ENCODE measurements at regions of chr4 and their contacts with region 1.

Region 1: DNA sequence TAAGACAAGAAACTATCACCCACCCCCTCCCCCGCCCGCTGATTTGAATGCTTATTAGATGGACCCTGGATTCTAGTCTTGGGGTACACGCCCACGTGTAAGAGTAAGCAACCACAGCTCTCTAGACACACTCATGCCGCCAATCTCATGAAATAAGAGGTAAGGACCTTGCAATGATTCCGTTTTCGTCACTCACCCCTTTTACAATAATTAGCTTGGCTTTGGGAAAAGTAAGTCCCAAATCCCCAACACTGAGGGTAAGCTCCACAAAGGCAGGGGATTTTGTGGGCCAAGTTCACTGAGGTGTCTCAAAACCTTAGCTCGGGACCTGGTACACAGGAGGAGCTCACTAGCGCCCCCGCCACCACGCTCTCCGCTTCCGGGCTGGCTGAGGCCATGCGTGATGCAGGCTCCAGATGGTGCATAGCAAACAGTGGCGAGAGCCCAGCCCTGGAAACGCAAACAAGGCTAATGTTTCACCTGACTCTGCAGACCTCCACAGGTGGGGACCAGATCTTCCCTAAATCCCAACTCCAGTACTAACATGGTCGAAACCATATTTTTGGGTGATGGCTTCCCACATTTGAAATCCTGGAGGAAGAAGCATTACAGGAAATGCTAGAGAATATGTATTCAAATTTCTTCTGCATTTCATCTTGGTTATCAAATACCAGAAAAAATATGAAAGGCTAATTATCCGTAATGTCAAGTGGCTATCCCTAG is 4.1 kb downstream of the PLAC8 start:
- DNase-seq: peak; percentile 80 to 94 (median 89)
- ATAC-seq: peak; percentile 74
- H3K4me3 ChIP-seq: peak overlapping the region; percentile 69 to 79
- H3K4me3 Mint-ChIP-seq: peak overlapping the region; percentile 99
- H3K27ac ChIP-seq: peak overlapping the region; percentile 68 to 71
- H3K27ac Mint-ChIP-seq: peak overlapping the region; percentile 97
- H3K4me1 ChIP-seq: peaks cover 36% of the 10 kb centered on the region
- H3K4me1 Mint-ChIP-seq: peaks cover 48% of the 10 kb centered on the region
- H3K27me3 ChIP-seq: no peaks in the 10 kb centered on the region
- H3K27me3 Mint-ChIP-seq: no peaks in the 10 kb centered on the region
- CTCF ChIP-seq: peak; percentile 70

Region 2: GRCh38 chr4:83012687-83013419 is 97.5 kb before region 1 on chr4:
- CTCF ChIA-PET with region 1: no interaction called
- POLR2A ChIA-PET with region 1: no interaction called
- intact Hi-C with region 1: loop called (anchors 5 kb)
- DNase-seq: peak; percentile 94 to 98 (median 96)
- ATAC-seq: peak; percentile 88
- H3K4me3 ChIP-seq: peak overlapping the region; percentile 54 to 69
- H3K4me3 Mint-ChIP-seq: peak overlapping the region; percentile 90
- H3K27ac ChIP-seq: peak overlapping the region; percentile 56 to 95
- H3K27ac Mint-ChIP-seq: peak overlapping the region; percentile 91
- H3K4me1 ChIP-seq: peaks cover 31% of the 10 kb centered on the region
- H3K4me1 Mint-ChIP-seq: peaks cover 40% of the 10 kb centered on the region
- H3K27me3 ChIP-seq: no peaks in the 10 kb centered on the region
- H3K27me3 Mint-ChIP-seq: no peaks in the 10 kb centered on the region
- CTCF ChIP-seq: peak; percentile 65

Region 3: GRCh38 chr4:83083925-83084475 is 26.4 kb before region 1 on chr4:
- CTCF ChIA-PET with region 1: interaction called, 40 read pairs
- POLR2A ChIA-PET with region 1: interaction called, 21 read pairs
- intact Hi-C with region 1: loop called in 1 of 2 experiments (anchors 1 kb)
- DNase-seq: peak; percentile 44 to 91 (median 61)
- ATAC-seq: peak; percentile 98
- H3K4me3 ChIP-seq: no peak overlapping the region
- H3K4me3 Mint-ChIP-seq: peak overlapping the region; percentile 47
- H3K27ac ChIP-seq: peak overlapping the region; percentile 67 to 81
- H3K27ac Mint-ChIP-seq: peak overlapping the region; percentile 97
- H3K4me1 ChIP-seq: peaks cover 29% of the 10 kb centered on the region
- H3K4me1 Mint-ChIP-seq: peaks cover 39% of the 10 kb centered on the region
- H3K27me3 ChIP-seq: no peaks in the 10 kb centered on the region
- H3K27me3 Mint-ChIP-seq: no peaks in the 10 kb centered on the region
- CTCF ChIP-seq: peak; percentile 65

Region 4: DNA sequence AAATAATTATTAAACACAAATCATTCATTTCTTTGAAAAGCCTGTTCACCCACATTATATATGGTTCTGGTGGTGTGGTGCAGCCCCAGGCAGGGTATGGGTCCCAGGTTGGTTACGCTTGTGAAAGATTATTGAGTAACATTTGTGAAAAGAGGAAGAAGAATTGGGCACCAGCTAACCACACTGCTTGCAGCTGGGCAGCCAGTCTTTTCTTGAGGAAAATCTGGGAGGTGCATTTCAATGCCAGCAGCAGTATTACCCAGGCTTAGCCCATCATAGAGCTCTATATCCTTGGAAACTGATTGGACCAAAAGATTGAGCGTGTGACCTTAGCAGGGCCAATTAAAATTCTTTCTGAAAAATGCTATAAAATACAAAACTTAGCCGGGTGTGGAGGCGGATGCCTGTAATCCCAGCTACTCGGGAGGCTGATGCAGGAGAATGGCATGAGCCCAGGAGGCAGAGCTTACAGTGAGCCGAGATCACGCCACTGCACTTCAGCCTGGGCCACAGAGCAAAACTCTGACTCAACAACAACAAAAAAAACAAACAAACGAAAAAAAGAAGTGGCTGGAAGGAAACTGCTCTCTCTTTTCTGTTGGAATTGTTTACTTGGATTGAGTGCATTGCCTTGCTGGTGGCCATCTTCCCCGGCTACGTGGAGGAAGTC is 13.9 kb after region 1 on chr4:
- CTCF ChIA-PET with region 1: interaction called, 21 read pairs
- POLR2A ChIA-PET with region 1: interaction called, 27 read pairs
- intact Hi-C with region 1: loop called in 1 of 2 experiments (anchors 2 kb)
- DNase-seq: peak in 1 of 9 experiments; percentile 16
- ATAC-seq: no peak
- H3K4me3 ChIP-seq: no peak overlapping the region
- H3K4me3 Mint-ChIP-seq: no peak overlapping the region
- H3K27ac ChIP-seq: no peak overlapping the region
- H3K27ac Mint-ChIP-seq: no peak overlapping the region
- H3K4me1 ChIP-seq: peaks cover 11% of the 10 kb centered on the region
- H3K4me1 Mint-ChIP-seq: peaks cover 18% of the 10 kb centered on the region
- H3K27me3 ChIP-seq: no peaks in the 10 kb centered on the region
- H3K27me3 Mint-ChIP-seq: no peaks in the 10 kb centered on the region
- CTCF ChIP-seq: no peak

Region 5: DNA sequence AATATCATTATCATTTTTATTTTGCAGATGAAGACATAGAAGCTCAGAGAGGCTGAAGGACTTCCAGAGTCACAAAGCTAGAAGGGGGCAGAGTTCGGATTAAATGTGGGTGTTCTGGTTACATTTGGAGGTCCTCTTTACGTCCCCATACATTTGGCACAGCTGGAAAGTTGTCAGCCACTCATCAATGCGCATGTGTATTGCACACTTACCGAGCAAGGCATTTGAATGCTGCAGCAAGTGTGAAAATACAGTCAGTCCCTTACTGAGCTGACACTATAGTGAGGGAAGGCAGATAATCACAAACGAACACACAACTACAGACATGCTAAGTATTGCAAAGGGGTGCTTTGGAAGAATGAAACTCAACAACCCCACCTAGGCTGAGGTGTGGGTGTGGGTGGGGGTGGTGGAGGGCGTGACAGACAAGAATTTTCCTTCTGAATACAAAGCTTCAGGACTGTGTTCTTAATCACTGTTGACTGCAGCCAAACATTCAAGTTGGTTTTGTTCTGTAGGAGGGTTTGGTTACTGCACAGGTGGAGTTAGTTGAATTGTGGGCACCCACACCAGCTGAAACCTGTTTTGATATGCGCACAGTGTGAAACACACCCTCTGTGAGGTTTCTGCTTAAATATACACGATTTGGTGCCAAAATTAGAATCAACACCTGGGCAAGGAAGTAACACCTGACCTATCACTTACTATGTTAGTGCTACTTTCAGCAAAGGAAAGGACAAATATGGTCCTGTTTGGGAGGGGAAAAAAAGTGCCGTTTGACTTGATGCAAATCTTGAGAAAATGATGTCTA is 101.9 kb after region 1 on chr4:
- CTCF ChIA-PET with region 1: interaction called, 31 read pairs
- POLR2A ChIA-PET with region 1: interaction called, 52 read pairs
- intact Hi-C with region 1: loop called in 1 of 2 experiments (anchors 1 kb)
- DNase-seq: peak; percentile 31 to 93 (median 59)
- ATAC-seq: peak; percentile 86
- H3K4me3 ChIP-seq: peak overlapping the region; percentile 1 to 4
- H3K4me3 Mint-ChIP-seq: peak overlapping the region; percentile 67
- H3K27ac ChIP-seq: peak overlapping the region; percentile 41 to 58
- H3K27ac Mint-ChIP-seq: peak overlapping the region; percentile 95
- H3K4me1 ChIP-seq: peaks cover 73% of the 10 kb centered on the region
- H3K4me1 Mint-ChIP-seq: peaks cover 78% of the 10 kb centered on the region
- H3K27me3 ChIP-seq: no peaks in the 10 kb centered on the region
- H3K27me3 Mint-ChIP-seq: no peaks in the 10 kb centered on the region
- CTCF ChIP-seq: no peak

Region 6: GRCh38 chr4:83252782-83253405 is 142.5 kb after region 1 on chr4:
- CTCF ChIA-PET with region 1: interaction called, 84 read pairs
- POLR2A ChIA-PET with region 1: interaction called, 4 read pairs
- intact Hi-C with region 1: loop called in 1 of 2 experiments (anchors 1 kb)
- DNase-seq: peak; percentile 51 to 88 (median 74)
- ATAC-seq: peak; percentile 93
- H3K4me3 ChIP-seq: no peak overlapping the region
- H3K4me3 Mint-ChIP-seq: no peak overlapping the region
- H3K27ac ChIP-seq: no peak overlapping the region
- H3K27ac Mint-ChIP-seq: peak overlapping the region; percentile 53
- H3K4me1 ChIP-seq: peaks cover 13% of the 10 kb centered on the region
- H3K4me1 Mint-ChIP-seq: peaks cover 24% of the 10 kb centered on the region
- H3K27me3 ChIP-seq: no peaks in the 10 kb centered on the region
- H3K27me3 Mint-ChIP-seq: no peaks in the 10 kb centered on the region
- CTCF ChIP-seq: peak; percentile 88

Measured in CD8-positive, alpha-beta T cell (primary cell).